ENCODE measurements at regions of chr11 and their contacts with region 1.

Region 1: DNA sequence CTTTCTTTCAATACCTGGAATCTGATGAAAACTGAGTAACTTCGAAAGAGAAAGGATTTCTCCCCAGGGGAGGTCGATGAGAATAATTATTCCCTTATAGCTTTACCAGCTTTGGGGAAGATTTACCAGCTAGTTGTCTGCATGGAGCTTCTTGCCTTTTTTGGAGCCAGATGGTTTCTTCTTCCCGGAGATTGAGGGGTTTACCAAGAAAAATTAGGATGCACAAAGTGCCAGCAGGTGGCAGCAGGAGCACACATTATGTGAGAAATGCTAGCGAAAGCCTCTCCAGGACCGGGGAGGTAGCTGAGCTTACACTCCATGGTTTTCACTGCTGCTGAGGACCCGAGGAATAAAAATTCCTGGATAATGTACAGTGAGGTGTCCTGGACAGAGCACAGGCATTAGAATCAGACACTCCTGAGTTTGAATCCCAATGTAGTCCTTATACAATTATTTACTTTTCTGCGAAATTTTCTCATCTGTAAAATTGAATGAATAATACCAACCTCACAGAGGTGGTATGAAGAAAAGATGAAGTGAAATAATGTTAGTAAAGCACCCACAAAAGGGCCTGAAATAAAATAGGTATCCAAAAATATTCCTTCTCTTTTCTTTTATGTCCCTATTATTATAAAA is 46.0 kb upstream of the PARVA start:
- DNase-seq: peak; percentile 89
- H3K4me3 Mint-ChIP-seq: no peak overlapping the region
- H3K27ac Mint-ChIP-seq: no peak overlapping the region
- H3K4me1 Mint-ChIP-seq: peaks cover 3% of the 10 kb centered on the region
- H3K27me3 Mint-ChIP-seq: no peaks in the 10 kb centered on the region

Region 2: GRCh38 chr11:12182676-12183541 is 148.4 kb before region 1 on chr11:
- CTCF ChIA-PET with region 1: no interaction called
- intact Hi-C with region 1: no loop called
- DNase-seq: no peak
- H3K4me3 Mint-ChIP-seq: no peak overlapping the region
- H3K27ac Mint-ChIP-seq: no peak overlapping the region
- H3K4me1 Mint-ChIP-seq: peaks cover 24% of the 10 kb centered on the region
- H3K27me3 Mint-ChIP-seq: peaks cover 2% of the 10 kb centered on the region

Region 3: GRCh38 chr11:12319461-12319951 is 11.9 kb before region 1 on chr11:
- CTCF ChIA-PET with region 1: interaction called, 13 read pairs
- intact Hi-C with region 1: no loop called
- DNase-seq: no peak
- H3K4me3 Mint-ChIP-seq: no peak overlapping the region
- H3K27ac Mint-ChIP-seq: no peak overlapping the region
- H3K4me1 Mint-ChIP-seq: peaks cover 7% of the 10 kb centered on the region
- H3K27me3 Mint-ChIP-seq: no peaks in the 10 kb centered on the region

Region 4: DNA sequence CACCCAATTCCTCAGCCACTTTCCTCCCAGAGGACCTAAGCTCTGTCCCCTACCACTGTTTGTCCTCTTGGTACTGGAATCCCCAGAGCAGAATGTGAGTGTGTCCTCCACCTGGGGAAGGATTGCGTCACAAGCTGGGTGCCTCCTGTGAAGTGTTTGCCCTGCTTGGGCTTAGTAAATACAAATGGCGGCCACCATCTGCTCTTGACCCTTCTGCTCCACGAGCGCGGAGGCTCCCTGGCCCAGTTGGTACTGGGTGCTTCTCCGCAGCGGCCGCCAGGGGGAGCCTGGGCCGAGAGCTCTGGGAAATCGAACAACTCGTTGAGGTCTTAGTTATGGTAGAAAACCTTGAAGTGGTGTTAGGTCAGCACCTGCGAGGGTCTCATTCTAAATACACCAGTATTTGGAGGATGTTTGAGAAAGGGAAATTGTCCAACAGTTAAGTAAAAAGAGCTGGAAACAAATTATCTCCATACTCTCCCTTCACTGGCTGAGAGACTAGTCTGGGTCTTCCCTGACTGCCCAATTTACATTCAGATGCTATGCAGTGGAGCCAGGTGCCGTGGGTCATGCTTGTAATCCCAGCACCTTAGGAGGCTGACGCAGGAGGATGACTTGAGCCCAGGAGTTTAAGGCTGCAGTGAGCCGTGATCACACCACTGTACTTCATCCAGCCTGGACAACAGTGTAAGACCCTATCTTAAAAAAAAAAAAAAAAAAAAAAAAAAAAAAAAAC is 268.2 kb after region 1 on chr11:
- CTCF ChIA-PET with region 1: interaction called, 5 read pairs
- intact Hi-C with region 1: loop called (anchors 1 kb)
- DNase-seq: peak; percentile 58
- H3K4me3 Mint-ChIP-seq: no peak overlapping the region
- H3K27ac Mint-ChIP-seq: no peak overlapping the region
- H3K4me1 Mint-ChIP-seq: peaks cover 14% of the 10 kb centered on the region
- H3K27me3 Mint-ChIP-seq: peaks cover 18% of the 10 kb centered on the region

Region 5: GRCh38 chr11:12813371-12814225 is 482.2 kb after region 1 on chr11:
- CTCF ChIA-PET with region 1: no interaction called
- intact Hi-C with region 1: loop called (anchors 10 kb)
- DNase-seq: no peak
- H3K4me3 Mint-ChIP-seq: no peak overlapping the region
- H3K27ac Mint-ChIP-seq: no peak overlapping the region
- H3K4me1 Mint-ChIP-seq: peaks cover 4% of the 10 kb centered on the region
- H3K27me3 Mint-ChIP-seq: peaks cover 50% of the 10 kb centered on the region

Region 6: GRCh38 chr11:12888525-12889158 is 557.3 kb after region 1 on chr11:
- CTCF ChIA-PET with region 1: interaction called, 54 read pairs
- intact Hi-C with region 1: loop called (anchors 1 kb)
- DNase-seq: peak; percentile 84
- H3K4me3 Mint-ChIP-seq: no peak overlapping the region
- H3K27ac Mint-ChIP-seq: no peak overlapping the region
- H3K4me1 Mint-ChIP-seq: no peaks in the 10 kb centered on the region
- H3K27me3 Mint-ChIP-seq: peaks cover 2% of the 10 kb centered on the region

Region 7: DNA sequence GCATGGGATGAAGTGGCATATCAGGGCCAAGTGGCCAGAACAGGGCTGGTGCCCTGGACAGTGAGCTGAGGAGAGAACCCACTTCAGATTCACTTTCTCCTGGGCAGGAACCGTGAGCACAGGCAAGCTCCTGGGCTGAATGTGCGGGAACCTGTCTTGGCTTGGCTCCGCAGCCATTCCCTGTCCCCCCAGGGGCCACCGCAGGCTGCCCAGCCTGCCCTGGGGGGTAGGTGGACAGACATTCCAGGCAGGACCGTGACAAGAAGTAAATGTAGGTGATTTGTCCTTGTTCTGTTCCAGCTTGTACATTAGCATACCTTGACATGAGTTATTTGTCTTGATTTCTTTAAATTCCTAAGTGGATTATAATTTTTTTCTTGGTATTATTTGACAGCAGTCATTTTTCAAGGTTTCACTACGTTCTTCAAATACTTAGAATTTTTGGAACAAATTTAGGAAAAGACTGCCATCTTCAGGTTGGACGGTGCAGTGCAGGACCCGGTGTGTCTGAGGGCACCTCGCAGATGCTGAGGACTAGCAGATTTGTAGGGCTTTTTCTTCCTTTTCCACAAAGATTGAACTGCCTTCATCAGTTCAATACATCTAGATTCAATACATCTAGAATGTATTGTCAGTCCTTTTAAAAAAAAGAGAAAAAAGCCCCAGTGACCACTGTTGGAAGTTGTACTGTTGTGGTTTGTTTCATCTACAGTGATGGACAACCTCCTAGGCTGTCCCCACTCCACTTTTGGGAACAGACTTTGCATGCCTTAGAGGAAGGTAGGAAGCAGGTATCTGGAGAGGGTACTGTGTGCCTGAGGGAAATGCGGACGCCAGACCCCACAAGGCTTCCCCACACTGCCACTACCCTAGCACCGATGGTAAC is 562.7 kb after region 1 on chr11:
- CTCF ChIA-PET with region 1: interaction called, 54 read pairs
- intact Hi-C with region 1: loop called (anchors 1 kb)
- DNase-seq: peak; percentile 78
- H3K4me3 Mint-ChIP-seq: no peak overlapping the region
- H3K27ac Mint-ChIP-seq: no peak overlapping the region
- H3K4me1 Mint-ChIP-seq: no peaks in the 10 kb centered on the region
- H3K27me3 Mint-ChIP-seq: peaks cover 6% of the 10 kb centered on the region

Measured in activated naive CD4-positive, alpha-beta T cell treated with anti-CD3 and anti-CD28 coated beads for 36 hours (primary cell).